CD8-positive, alpha-beta memory T cell (primary cell): ENCODE measurements at regions of chr9 and their contacts with region 1.

Region 1: DNA sequence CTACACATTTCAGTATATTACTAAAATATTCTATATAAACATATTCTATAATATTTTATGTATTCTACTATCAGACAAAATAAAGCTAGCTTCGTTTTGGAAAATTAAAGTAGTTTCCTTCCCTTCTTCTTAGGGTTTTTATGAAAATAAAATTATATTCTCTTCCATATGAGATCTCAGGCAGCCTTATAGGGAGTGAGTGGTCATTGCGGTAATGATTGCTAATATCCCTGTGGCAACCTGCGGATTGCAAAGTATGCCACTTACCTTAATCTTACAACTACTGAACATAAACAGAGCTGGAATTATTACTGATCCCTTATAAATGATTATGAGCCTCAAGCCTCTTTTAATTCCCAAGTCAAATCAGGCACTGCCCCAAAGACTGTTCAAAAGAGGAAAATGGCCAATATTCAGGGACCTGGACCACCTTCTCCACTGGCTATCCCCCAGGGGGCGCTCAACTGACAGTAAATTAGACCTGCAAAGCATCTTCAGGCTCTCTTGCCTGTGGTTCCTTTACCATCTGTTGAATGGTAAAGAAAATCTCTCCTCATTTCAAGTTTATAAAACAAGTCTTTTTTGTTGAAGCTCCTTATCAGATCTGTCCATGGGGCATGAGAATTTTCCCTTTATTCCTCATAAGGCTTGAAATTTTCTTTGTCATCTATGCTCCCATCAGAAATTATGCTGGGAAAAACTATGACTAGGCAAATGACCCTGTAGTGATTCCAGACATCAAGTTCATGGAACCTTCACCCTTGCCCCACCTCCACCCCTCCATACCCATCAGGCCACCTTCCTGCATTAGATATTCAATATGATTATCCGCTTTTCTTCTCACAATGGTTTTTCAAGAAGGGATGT is 163.9 kb downstream of the CEMIP2 start:
- DNase-seq: peak; percentile 64 to 84 (median 69)
- H3K4me3 ChIP-seq: no peak overlapping the region
- H3K4me3 Mint-ChIP-seq: no peak overlapping the region
- H3K27ac ChIP-seq: no peak overlapping the region
- H3K27ac Mint-ChIP-seq: no peak overlapping the region
- H3K4me1 ChIP-seq: no peaks in the 10 kb centered on the region
- H3K4me1 Mint-ChIP-seq: no peaks in the 10 kb centered on the region
- H3K27me3 ChIP-seq: no peaks in the 10 kb centered on the region
- H3K27me3 Mint-ChIP-seq: no peaks in the 10 kb centered on the region

Region 2: GRCh38 chr9:71490810-71491209 is 113.6 kb before region 1 on chr9:
- CTCF ChIA-PET with region 1: no interaction called
- POLR2A ChIA-PET with region 1: no interaction called
- DNase-seq: no peak
- H3K4me3 ChIP-seq: no peak overlapping the region
- H3K4me3 Mint-ChIP-seq: no peak overlapping the region
- H3K27ac ChIP-seq: no peak overlapping the region
- H3K27ac Mint-ChIP-seq: no peak overlapping the region
- H3K4me1 ChIP-seq: no peaks in the 10 kb centered on the region
- H3K4me1 Mint-ChIP-seq: no peaks in the 10 kb centered on the region
- H3K27me3 ChIP-seq: no peaks in the 10 kb centered on the region
- H3K27me3 Mint-ChIP-seq: peaks cover 22 to 41% of the 10 kb centered on the region in 2 donors

Region 3: DNA sequence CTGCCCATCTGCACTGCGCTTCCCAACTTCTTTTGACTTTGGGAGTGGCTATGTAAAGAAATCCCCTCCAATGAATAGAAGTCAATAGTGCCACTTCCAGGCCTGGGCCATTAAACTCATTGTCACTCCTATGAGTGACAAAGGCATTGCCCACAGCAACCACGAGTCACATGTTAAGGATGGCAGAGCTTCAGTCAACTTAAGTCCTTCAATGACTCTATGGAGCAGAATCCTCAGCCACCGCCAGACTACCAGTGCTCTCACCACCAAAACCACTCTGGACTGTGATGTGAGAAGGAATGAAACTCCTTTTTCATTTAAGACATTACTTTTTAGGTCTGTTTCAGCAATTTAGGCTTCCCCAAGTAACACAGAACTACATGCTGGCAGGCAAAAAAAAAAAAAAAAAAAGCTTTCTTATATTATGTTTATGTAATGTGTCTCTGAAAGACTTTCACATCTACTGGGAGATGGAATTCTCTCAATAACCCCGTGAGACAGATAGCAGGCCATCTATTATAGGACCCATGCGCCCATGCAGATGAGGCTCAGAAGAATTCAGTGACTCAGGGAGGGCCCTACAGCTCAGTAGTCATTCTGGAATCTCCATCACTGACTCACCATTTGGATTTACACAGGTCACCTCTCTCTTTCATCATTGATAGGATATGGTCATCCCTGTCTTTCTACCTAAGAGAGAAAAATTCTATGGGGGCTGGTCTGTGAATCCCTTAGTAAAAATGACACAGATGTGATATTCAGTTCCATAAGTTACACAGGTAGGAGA is 16.7 kb before region 1 on chr9:
- CTCF ChIA-PET with region 1: no interaction called
- POLR2A ChIA-PET with region 1: no interaction called
- DNase-seq: no peak
- H3K4me3 ChIP-seq: no peak overlapping the region
- H3K4me3 Mint-ChIP-seq: no peak overlapping the region
- H3K27ac ChIP-seq: no peak overlapping the region
- H3K27ac Mint-ChIP-seq: no peak overlapping the region
- H3K4me1 ChIP-seq: no peaks in the 10 kb centered on the region
- H3K4me1 Mint-ChIP-seq: no peaks in the 10 kb centered on the region
- H3K27me3 ChIP-seq: no peaks in the 10 kb centered on the region
- H3K27me3 Mint-ChIP-seq: peaks cover 7 to 11% of the 10 kb centered on the region in 2 donors

Region 4: DNA sequence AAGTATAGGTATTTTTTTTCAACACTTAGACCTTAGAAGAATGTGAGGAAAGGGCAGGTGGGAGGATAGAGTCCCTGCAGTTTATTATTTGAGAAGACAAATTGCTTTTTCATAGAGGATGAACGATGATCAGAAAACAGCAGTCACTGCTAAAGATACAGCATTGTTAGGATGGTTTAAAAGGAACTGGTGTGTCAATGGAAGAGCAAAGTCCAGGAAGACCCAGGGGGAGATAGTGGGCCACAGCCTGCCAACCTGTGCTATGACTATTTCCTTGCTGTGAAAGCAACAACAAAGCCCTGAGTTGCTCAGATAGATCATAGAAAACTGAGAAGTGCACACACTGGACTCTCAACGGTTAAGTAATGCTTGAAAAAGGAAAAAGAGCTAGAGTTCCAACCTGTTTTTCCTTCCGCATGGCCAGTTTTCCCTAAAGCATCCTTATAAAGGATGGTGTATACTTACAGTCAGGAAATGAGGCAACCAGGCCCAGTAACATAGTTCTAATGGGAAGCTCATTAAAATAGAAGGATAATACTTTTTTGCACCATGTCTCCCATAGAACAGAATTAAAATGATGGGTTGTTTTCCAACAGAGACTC is 10.1 kb after region 1 on chr9:
- CTCF ChIA-PET with region 1: interaction called, 12 read pairs
- POLR2A ChIA-PET with region 1: no interaction called
- DNase-seq: no peak
- H3K4me3 ChIP-seq: no peak overlapping the region
- H3K4me3 Mint-ChIP-seq: no peak overlapping the region
- H3K27ac ChIP-seq: no peak overlapping the region
- H3K27ac Mint-ChIP-seq: no peak overlapping the region
- H3K4me1 ChIP-seq: no peaks in the 10 kb centered on the region
- H3K4me1 Mint-ChIP-seq: no peaks in the 10 kb centered on the region
- H3K27me3 ChIP-seq: no peaks in the 10 kb centered on the region
- H3K27me3 Mint-ChIP-seq: no peaks in the 10 kb centered on the region

Region 5: GRCh38 chr9:71716138-71716909 is 111.9 kb after region 1 on chr9:
- CTCF ChIA-PET with region 1: interaction called, 17 read pairs
- POLR2A ChIA-PET with region 1: no interaction called
- DNase-seq: peak in 1 of 5 donors; percentile 12
- H3K4me3 ChIP-seq: no peak overlapping the region
- H3K4me3 Mint-ChIP-seq: no peak overlapping the region
- H3K27ac ChIP-seq: no peak overlapping the region
- H3K27ac Mint-ChIP-seq: peak overlapping the region in 2 of 8 donors; percentile 36 to 82
- H3K4me1 ChIP-seq: no peaks in the 10 kb centered on the region
- H3K4me1 Mint-ChIP-seq: peaks cover 0 to 4% (median 1%) of the 10 kb centered on the region in 3 donors
- H3K27me3 ChIP-seq: no peaks in the 10 kb centered on the region
- H3K27me3 Mint-ChIP-seq: no peaks in the 10 kb centered on the region